Cardiac septum (tissue), 1 donor: ENCODE measurements at regions of chr21 and their contacts with region 1.

Region 1: DNA sequence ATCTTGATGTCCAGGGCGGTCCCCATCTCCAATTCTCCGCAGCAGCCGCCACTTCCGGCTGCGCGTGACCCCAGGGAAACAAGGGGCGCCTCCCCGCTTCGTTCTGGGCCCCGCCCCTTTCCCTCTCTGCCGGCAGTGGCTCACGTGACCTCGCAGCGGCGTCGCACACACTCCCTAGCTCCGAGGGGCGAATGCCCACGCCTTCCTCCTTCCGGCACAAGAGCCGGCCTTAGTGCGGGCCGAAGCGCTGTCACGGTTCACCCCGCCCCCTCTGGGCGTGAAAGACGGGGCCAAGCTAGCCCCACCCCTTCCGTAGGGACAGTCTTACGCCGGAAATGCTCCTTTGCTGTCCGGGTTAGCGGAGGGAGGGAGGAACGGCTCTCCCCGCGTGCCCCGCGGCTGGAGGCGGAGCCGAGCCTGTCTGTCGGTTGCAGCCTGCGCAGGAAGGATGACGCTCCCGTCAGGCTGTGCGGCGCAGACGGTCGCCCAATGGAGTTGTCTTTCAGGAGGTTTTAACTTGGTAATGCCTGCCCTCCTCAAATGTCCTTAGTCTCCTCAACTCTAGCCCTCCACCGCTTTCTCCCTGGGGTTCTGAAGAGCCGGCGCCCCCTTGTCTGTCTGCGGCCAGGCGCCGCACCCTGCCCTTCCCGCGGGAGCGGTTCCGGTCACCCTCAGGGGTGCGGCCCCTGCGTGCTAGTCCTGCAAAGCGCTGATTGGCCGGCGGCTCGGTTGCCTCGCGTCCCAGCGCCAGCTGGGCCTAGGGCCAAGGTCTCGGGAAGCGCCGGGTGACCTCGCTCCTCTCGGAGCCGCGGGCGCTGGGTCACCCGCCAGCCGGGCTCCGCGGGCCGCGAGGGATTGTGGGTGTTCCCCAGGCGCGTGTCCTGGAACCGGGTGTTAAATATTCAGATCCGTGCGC is at the start of gene VPS26C:
- DNase-seq: peak; percentile 99
- total RNA-seq, gene VPS26C: 44.2 TPM

Region 2: DNA sequence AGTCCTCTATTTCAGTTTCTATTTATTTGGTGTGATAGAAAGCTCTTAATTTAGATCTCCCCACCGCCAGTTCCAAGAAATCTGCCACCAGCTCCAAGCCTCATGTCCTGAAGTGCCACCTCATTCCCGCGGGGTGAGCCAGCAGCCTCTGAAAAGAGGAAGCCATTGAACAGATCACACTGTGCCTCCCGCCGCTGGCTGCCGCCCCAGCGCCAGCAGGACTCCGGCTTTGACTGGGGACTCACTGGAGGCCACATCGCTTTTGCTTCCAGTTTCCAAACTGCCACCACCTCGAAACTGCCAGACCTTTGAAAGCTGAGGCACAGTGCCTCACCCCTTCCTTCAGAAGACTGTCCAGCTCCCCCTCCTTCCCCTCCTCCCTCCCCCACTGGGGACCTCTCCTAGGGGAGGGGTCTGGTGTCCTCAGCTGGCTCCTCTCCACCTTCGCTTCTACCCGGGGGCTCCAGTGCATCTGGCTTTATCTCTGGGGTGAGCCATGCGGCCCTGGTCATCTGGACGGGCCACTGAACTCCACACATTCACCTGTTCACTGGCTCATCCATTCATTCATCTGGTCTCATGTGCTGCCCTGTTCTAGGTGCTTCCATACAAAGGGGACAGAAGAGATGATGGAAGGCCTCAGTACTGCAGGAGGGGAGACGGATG is 59.3 kb before region 1 on chr21:
- intact Hi-C with region 1: no loop called
- DNase-seq: peak; percentile 92

Region 3: GRCh38 chr21:37220981-37221664 is 46.4 kb before region 1 on chr21:
- intact Hi-C with region 1: loop called (anchors 1 kb)
- DNase-seq: peak; percentile 98

Region 4: DNA sequence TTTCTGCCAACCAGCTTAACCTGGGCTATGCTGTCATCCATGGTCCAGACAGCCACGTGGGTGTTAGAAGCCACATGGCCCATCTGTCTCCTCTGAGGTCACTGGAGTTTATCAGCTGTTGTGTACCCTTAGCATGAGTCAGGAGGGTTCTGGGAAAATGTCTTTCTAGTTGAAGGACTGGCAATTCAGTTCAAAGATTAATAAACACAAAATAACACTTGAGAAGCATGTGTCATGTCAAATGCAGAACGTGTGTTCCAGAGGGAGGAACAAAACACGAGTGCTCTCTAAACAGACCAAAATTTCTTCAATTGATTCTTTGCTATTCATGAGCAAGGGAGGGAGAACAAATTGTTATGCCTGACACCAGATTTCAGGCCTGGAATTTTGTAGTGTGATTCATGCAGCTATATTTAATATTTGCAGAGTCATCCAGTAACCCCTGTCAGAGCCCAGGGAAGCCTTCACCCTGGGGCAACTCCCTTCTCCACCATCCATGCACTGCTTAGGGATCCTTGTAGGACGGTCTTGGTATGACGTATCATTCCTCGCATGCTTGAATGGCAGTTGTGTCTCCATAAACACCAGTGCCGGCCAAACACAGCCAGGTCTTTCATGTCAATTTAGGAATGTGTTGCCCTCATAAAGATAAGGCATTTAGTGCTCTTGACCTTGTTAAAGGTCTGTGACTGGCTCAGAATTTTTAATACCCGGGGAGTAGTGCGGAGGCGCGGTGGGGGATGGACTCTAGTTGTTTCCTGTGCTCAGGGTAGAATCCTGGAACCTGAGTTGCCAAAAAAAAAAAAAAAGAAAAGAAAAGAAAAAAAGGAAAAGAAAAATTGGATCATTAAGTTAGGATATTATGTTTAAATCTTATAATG is 71.4 kb after region 1 on chr21:
- intact Hi-C with region 1: loop called (anchors 1 kb)
- DNase-seq: no peak

Region 5: GRCh38 chr21:37563641-37564340 is 296.3 kb after region 1 on chr21:
- intact Hi-C with region 1: loop called (anchors 5 kb)
- DNase-seq: peak; percentile 97